ENCODE measurements at regions of chr6 and their contacts with region 1.

Region 1: DNA sequence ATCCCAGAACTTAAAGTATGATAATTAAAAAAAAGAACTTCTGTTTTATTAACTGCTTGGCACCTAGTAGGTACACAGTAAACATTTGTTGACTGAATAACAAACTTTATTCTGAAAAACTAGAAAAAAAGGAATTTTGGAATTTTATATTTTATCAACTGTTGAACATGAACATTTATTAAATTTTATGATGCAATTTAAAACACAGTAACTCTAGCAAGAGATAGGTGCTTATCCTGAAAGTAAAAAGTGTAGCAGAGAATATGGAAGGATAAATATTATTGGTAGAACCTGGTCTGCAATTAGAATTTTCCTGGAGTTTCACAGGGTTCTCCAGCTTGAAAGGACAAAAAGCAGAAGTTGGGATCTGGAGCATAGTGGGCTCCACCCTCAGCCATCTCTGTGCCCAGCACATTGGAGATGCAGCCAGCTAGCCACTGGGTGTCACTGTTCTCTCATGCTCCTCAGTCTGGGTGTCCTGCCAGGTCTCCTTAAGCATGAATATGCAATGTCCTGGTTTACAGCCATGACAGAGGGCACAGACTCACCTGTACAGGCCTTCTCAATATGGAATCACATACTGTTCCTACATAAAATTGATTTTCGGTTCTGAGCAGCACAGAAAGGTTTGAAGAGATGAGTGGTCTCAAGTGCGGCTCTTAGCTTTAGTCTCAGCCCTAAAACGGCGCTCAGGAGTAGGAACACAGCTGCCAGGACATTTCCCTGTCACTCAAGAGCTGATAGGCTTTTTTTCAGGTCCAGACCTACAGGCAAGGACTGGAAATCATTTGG is 31.7 kb upstream of the IL20RA start:
- H3K4me3 ChIP-seq: no peak overlapping the region
- H3K27ac ChIP-seq: no peak overlapping the region
- H3K4me1 ChIP-seq: no peaks in the 10 kb centered on the region
- CTCF ChIP-seq: peak; percentile 77; the same call in 1 of the 2 replicates

Region 2: DNA sequence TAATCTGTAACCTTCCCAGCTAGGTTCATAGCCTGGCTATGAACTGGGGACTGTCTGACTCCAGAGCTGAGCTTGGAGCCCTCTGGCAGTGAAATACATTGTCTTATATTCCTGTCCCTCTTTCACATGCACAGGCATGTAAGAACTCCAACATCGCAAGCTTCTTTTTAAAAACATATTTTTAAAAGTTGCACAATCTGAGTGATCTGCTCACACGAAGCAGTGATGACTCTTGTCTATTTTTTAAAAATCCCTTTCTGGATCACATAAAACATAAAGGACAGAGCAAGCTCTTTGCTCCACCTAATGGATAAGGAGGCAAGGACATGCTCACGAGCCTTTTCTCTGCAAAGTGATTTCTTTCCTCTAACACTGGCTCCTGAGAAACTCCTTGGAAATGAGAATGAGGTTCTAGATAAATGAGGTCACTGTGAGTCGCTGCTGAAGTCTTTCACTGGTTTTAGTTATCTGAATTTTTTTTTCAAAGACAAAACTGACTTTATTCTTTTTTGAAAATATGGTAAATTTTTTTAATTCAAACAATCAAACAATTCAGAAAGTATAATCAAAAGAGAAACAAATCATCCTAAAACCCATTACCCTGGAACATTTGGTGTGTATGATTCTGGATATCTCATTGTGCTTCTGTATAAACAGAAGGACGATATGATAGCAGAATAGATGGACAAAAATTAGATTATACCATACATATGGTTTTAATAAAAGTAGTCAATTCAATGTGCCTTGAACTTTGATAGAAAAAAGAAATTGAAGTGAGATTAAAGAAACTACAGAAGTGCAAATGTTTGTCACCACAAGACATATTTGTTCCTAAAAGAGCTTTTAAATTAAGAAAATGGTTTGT is 62.5 kb before region 1 on chr6:
- CTCF ChIA-PET with region 1: interaction called, 10 read pairs
- POLR2A ChIA-PET with region 1: no interaction called
- H3K4me3 ChIP-seq: no peak overlapping the region
- H3K27ac ChIP-seq: no peak overlapping the region
- H3K4me1 ChIP-seq: no peaks in the 10 kb centered on the region
- CTCF ChIP-seq: no peak

Region 3: GRCh38 chr6:137089305-137089704 is 12.8 kb after region 1 on chr6:
- CTCF ChIA-PET with region 1: interaction called, 32 read pairs
- POLR2A ChIA-PET with region 1: no interaction called
- H3K4me3 ChIP-seq: no peak overlapping the region
- H3K27ac ChIP-seq: no peak overlapping the region
- H3K4me1 ChIP-seq: no peaks in the 10 kb centered on the region
- CTCF ChIP-seq: no peak

Region 4: DNA sequence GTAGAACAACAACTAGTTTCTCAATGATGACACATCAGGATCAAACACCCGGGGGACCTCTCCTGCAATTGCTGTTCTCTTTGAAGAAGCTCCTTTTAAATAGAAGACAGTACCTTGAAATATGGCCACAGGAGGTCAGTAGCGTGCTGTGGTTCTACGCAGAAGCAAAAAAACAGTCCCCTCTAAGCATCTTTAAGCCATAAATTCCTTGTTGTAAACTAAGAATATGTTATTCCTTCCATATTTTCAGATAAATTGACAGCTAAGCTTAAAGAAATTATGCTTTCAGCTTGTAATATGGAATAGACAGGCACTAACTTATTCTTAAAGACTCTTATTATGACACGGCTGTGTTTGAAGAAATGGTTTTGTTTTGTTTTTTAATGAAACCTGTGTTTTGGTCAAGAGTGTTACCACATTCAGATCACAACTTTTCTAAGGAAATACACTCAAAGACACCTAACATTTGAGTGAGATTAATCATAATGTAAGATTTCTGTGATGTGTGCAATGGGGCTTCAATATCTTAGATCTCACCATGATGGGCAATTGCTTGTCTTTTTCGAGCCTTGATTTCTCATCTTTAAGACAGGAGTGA is 18.0 kb after region 1 on chr6:
- CTCF ChIA-PET with region 1: interaction called, 32 read pairs
- POLR2A ChIA-PET with region 1: no interaction called
- H3K4me3 ChIP-seq: no peak overlapping the region
- H3K27ac ChIP-seq: no peak overlapping the region
- H3K4me1 ChIP-seq: no peaks in the 10 kb centered on the region
- CTCF ChIP-seq: peak; percentile 49; the same call in 1 of the 2 replicates

Region 5: GRCh38 chr6:137271245-137272183 is 195.0 kb after region 1 on chr6:
- CTCF ChIA-PET with region 1: interaction called, 10 read pairs
- POLR2A ChIA-PET with region 1: no interaction called
- H3K4me3 ChIP-seq: no peak overlapping the region
- H3K27ac ChIP-seq: no peak overlapping the region
- H3K4me1 ChIP-seq: no peaks in the 10 kb centered on the region
- CTCF ChIP-seq: no peak